ENCODE measurements at regions of chr13 and their contacts with region 1.

Region 1: GRCh38 chr13:30486230-30487074 is 20.7 kb upstream of the HMGB1 start:
- DNase-seq: no peak
- H3K4me3 ChIP-seq: no peak overlapping the region
- H3K27ac ChIP-seq: no peak overlapping the region
- H3K4me1 ChIP-seq: peaks cover 12% of the 10 kb centered on the region
- H3K27me3 ChIP-seq: no peaks in the 10 kb centered on the region
- CTCF ChIP-seq: no peak

Region 2: GRCh38 chr13:30617315-30618185 is 131.1 kb after region 1 on chr13 and contains the start of gene USPL1:
- intact Hi-C with region 1: loop called (anchors 10 kb)
- DNase-seq: peak; percentile 98
- H3K4me3 ChIP-seq: peak within 1 kb of the TSS; percentile 82
- H3K27ac ChIP-seq: peak within 1 kb of the TSS; percentile 99
- H3K4me1 ChIP-seq: peaks cover 53% of the 10 kb centered on the region
- H3K27me3 ChIP-seq: no peaks in the 10 kb centered on the region
- CTCF ChIP-seq: peak; percentile 60
- total RNA-seq, gene USPL1: 9.1 TPM